PC-9 (cell line): ENCODE measurements at regions of chr1 and their contacts with region 1.

Region 1: DNA sequence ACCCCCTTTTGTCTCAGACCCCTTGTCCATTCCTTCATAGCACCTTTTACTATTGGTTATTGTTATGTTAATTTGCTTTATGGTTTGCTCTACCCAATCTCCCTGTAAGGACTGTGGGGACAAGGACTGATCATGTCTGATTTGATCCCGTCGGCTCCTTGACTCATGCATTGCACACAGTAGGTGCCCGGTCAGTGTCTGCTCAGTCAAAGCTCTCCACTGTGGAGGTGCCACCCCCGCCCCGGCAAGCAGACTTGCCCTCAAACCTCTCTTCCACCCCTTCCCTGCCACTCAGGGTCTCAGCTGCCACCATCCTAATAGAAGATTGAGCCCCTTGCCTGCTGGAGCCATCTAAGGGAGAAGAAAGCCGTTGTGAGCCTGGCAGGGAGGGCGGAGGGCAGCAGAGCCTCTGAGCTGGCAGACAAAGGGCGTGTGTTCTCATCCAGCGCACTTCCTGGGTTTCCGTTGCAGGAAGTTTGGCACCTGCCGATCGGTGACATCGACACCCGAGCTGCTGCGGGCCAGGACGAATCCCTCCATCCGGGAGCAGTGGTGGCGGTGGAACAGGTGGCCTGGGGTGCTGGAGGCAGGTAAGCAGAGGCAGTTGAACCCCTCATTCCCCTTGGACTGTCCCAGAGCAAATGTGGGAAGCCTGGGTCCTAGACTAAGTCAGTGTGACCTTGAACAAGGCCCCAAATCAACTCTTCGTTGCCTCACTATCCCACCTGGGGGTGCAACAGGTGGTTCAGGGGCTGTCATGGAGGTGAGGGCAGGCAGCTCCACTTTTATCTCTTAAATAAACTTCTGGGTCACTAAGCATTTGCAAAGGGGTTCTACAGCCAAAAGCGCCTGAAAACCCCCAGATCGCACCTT is 2.2 kb upstream of the FBLIM1 start:
- DNase-seq: peak; percentile 42 to 62
- H3K4me3 ChIP-seq: peak overlapping the region; percentile 29; the same call in 1 of the 2 replicates
- H3K27ac ChIP-seq: no peak overlapping the region
- H3K4me1 ChIP-seq: peaks cover 12% of the 10 kb centered on the region
- H3K27me3 ChIP-seq: no peaks in the 10 kb centered on the region
- CTCF ChIP-seq: no peak

Region 2: DNA sequence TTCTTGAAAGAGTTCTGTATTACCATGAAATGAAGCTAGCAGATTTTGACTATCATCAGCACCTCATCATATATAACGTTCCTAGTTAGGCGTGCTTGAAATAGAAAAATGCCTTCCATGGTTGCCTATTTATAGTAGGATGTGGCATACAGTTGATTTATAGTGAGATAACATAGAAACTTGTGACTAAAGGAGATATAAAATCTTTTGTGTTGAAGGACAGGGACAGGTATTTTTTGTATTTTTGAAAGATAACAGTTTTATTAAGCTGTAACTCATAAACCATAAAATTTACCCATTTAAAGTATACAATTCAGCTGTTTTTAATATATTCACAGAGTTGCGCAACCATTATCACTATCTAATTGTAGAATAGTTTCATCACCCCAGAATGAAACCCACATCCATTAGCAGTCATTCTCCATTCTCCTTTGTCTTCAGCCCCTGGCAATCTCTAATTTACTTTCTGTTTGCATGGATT is 110.4 kb after region 1 on chr1:
- CTCF ChIA-PET with region 1: no interaction called
- POLR2A ChIA-PET with region 1: interaction called, 36 read pairs
- intact Hi-C with region 1: no loop called
- DNase-seq: no peak
- H3K4me3 ChIP-seq: no peak overlapping the region
- H3K27ac ChIP-seq: no peak overlapping the region
- H3K4me1 ChIP-seq: no peaks in the 10 kb centered on the region
- H3K27me3 ChIP-seq: no peaks in the 10 kb centered on the region
- CTCF ChIP-seq: no peak